Heart left ventricle (tissue), 16 donors: ENCODE measurements at regions of chr12 and their contacts with region 1.

Region 1: DNA sequence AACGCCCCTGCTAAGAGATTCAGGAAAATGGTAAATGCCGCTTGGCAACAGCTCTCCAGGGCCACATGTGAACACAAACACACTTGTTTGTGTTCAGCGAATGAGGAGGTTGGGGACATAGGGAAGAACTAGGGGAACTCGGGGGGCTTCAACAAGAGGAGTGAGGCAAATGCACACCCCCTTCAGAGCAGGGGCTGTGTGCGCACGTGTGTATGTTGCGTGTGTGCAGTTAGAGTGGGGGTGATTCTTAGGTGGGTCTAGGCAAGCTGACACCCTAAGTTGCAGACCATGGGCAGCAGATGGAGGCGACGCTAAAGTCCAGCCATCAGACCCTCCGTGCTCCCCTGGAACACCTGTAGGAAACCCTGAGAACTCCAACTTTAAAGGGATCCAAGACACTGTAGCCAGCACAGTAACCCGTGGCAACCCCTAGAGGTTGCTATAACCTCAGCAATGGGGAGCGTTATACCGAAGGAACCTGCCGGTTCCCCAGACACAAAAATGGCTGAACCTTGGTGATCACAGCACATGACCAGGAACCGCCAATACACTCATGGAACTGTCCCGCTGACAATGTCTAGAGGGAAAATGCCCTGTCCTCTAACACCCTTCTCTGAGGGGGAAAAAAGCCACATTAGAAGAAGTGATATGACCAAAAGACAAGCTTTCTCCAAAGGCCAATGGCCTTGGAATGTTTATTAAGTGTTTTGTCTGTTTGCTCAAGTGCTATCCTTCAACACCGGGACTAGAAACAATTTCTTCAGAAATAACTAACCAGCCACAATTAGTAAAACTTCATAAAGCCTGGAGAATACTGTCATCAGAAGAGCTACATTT is 86.5 kb upstream of the CEP83 start:
- DNase-seq: peak in 4 of 5 donors; percentile 32 to 46 (median 39)
- ATAC-seq: peak; percentile 80 to 98 (median 93)
- H3K4me3 ChIP-seq: no peak overlapping the region
- H3K27ac ChIP-seq: no peak overlapping the region
- H3K4me1 ChIP-seq: no peaks in the 10 kb centered on the region
- H3K27me3 ChIP-seq: no peaks in the 10 kb centered on the region
- CTCF ChIP-seq: peak; percentile 62 to 86 (median 79)
- POLR2A ChIP-seq: no peak

Region 2: GRCh38 chr12:94725375-94726168 is 179.4 kb after region 1 on chr12:
- intact Hi-C with region 1: loop called in 3 of 10 experiments (anchors 10 kb)
- DNase-seq: no peak
- ATAC-seq: peak in 1 of 4 donors; percentile 65
- H3K4me3 ChIP-seq: no peak overlapping the region
- H3K27ac ChIP-seq: no peak overlapping the region
- H3K4me1 ChIP-seq: peaks cover 0 to 4% (median 0%) of the 10 kb centered on the region in 12 donors
- H3K27me3 ChIP-seq: no peaks in the 10 kb centered on the region
- CTCF ChIP-seq: peak in 11 of 12 donors; percentile 19 to 59 (median 35)
- POLR2A ChIP-seq: no peak

Region 3: DNA sequence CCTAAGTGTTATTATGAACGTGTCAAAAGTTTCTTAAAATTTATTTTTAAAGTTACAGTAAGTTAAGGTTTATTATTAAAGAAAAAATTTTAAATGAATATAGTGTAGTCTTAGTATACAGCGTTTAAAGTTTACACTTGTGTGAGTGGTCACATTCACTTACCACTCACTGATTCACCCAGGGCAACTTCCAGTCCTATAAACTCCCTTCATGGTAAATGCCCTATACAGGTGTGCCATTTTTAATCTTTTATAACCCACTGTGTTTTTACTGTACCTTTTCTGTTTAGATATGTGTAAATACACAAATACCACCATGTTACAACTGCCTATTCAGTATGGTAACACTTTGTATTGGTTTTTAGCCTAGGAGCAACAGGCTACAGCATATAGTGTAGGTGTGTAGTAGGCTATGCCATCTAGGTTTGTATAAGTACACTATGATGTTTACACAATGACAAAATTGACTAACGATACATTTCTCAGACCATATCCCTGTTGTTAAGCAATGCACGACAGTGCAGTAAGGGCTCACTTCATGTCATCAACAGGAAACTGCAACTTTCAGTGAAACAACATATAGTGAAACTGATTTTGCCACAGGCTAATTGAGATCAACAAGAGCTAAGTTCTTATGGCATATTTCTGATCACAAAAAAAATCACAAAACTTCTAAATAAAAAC is 216.2 kb after region 1 on chr12:
- intact Hi-C with region 1: loop called (anchors 2 to 10 kb)
- DNase-seq: no peak
- ATAC-seq: no peak
- H3K4me3 ChIP-seq: no peak overlapping the region
- H3K27ac ChIP-seq: no peak overlapping the region
- H3K4me1 ChIP-seq: peaks cover 0 to 2% (median 0%) of the 10 kb centered on the region in 12 donors
- H3K27me3 ChIP-seq: peaks cover 0 to 6% (median 0%) of the 10 kb centered on the region in 9 donors
- CTCF ChIP-seq: no peak
- POLR2A ChIP-seq: no peak

Region 4: GRCh38 chr12:94769047-94769420 is 222.9 kb after region 1 on chr12:
- intact Hi-C with region 1: loop called (anchors 2 to 10 kb)
- DNase-seq: no peak
- ATAC-seq: no peak
- H3K4me3 ChIP-seq: no peak overlapping the region
- H3K27ac ChIP-seq: no peak overlapping the region
- H3K4me1 ChIP-seq: peaks cover 0 to 11% (median 1%) of the 10 kb centered on the region in 12 donors
- H3K27me3 ChIP-seq: peaks cover 0 to 6% (median 0%) of the 10 kb centered on the region in 9 donors
- CTCF ChIP-seq: no peak
- POLR2A ChIP-seq: no peak

Region 5: GRCh38 chr12:94875525-94875924 is 329.4 kb after region 1 on chr12:
- intact Hi-C with region 1: loop called in 1 of 10 experiments (anchors 10 kb)
- DNase-seq: no peak
- ATAC-seq: no peak
- H3K4me3 ChIP-seq: no peak overlapping the region
- H3K27ac ChIP-seq: no peak overlapping the region
- H3K4me1 ChIP-seq: peaks cover 0 to 26% (median 5%) of the 10 kb centered on the region in 12 donors
- H3K27me3 ChIP-seq: peaks cover 13 to 76% (median 37%) of the 10 kb centered on the region in 9 donors
- CTCF ChIP-seq: peak in 3 of 12 donors; percentile 8 to 31 (median 15)
- POLR2A ChIP-seq: no peak